Mammary epithelial cell (primary cell): ENCODE measurements at regions of chr16 and their contacts with region 1.

Region 1: GRCh38 chr16:15427648-15428239 is 6.6 kb upstream of the BMERB1 start:
- DNase-seq: no peak
- H3K4me3 ChIP-seq: no peak overlapping the region
- H3K27ac ChIP-seq: no peak overlapping the region
- H3K4me1 ChIP-seq: peaks cover 3% of the 10 kb centered on the region
- H3K27me3 ChIP-seq: no peaks in the 10 kb centered on the region
- CTCF ChIP-seq: peak; percentile 38 to 64

Region 2: DNA sequence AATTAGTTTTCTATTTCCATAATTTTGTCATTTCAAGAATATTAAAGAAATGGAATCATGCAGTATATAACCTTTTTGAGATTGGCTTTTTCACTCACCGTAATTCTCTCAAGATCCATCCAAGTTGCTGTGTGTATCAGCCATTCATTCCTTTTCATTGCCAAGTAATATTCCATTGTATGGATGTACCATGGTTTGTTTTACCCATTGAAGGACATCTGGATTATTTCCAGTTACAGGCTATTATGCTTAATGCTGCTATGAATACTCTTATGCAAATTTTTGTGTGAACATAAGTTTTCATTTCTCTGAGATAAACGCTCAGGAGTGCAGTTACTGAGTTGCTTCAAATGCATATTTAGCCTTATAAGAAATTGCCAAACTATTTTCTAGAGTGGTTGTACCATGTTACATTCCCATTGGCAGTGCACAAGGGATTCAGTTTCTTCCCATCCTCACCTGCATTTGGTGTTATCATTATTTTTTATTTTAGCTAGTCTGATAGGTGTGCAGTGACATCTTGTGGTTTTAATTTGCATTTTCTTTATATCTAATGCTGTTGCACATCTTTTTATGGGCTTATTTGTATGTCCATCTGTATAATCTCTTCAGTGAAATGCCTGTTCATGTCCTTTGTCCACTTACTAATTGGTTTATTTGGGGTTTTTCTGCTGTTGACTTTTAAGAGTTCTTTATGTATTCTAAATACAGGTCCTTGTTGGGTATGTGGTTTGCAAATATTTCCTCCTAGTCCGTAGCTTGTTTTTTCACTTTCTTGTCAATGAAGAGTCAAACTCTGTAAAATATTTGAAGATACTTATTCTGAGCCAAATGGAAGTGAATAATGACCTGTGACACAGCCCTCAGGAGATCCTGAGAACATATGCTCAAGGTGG is 39.4 kb after region 1 on chr16:
- CTCF ChIA-PET with region 1: no interaction called
- dilution Hi-C with region 1: no loop called
- in situ Hi-C with region 1: no loop called
- intact Hi-C with region 1: loop called (anchors 5 kb)
- DNase-seq: no peak
- H3K4me3 ChIP-seq: no peak overlapping the region
- H3K27ac ChIP-seq: no peak overlapping the region
- H3K4me1 ChIP-seq: peaks cover 6% of the 10 kb centered on the region
- H3K27me3 ChIP-seq: no peaks in the 10 kb centered on the region
- CTCF ChIP-seq: peak; percentile 45

Region 3: DNA sequence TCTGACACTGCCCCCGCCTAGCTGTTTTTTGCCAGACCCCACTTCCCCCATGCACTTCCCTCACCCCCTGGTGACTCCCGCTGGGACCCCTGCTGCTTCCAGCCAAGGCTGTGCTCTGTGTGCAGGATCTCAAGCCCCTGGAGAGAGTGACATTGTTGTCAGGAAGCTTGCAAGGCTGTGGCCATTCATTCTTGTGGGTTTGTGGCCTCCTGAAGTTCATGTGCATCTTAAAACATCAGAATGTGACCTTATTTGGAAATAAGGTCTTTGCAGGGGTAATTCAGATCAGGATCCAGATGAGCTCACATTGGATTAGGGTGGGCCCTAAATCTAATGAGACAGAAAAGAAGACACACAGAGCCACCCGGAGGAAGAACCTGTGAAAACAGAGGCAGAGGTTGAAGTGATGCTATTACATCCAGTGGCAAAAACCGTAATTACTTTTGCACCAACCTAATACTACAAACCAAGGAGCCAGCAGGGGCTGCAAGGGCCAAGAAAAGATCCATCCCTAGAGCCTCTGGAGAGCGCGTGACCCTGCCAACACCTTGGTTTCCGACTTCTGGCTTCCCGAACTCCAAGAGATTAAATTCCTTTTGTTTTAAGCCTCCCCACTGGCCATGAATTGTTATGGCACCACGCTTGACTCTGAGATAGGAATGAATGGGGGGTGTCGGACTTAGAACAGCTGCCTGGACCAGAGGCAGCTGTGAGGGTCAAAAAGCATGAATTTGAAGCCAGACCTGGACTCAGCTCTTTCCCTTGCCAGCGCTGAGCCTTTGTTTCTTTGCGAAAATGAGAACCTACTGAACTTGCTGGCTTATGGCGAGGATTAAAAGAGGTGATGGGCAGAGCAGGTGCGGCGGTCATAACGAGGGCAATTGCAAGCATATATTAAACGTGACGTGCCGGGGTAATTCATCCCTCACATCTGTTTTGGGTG is 82.1 kb after region 1 on chr16:
- CTCF ChIA-PET with region 1: no interaction called
- dilution Hi-C with region 1: loop called (anchors 5 kb)
- in situ Hi-C with region 1: no loop called
- intact Hi-C with region 1: no loop called
- DNase-seq: no peak
- H3K4me3 ChIP-seq: no peak overlapping the region
- H3K27ac ChIP-seq: no peak overlapping the region
- H3K4me1 ChIP-seq: peaks cover 12% of the 10 kb centered on the region
- H3K27me3 ChIP-seq: no peaks in the 10 kb centered on the region
- CTCF ChIP-seq: no peak

Region 4: GRCh38 chr16:15553313-15554088 is 125.8 kb after region 1 on chr16:
- CTCF ChIA-PET with region 1: no interaction called
- dilution Hi-C with region 1: no loop called
- in situ Hi-C with region 1: no loop called
- intact Hi-C with region 1: loop called (anchors 10 kb)
- DNase-seq: peak; percentile 11
- H3K4me3 ChIP-seq: no peak overlapping the region
- H3K27ac ChIP-seq: no peak overlapping the region
- H3K4me1 ChIP-seq: no peaks in the 10 kb centered on the region
- H3K27me3 ChIP-seq: no peaks in the 10 kb centered on the region
- CTCF ChIP-seq: no peak

Region 5: GRCh38 chr16:15704545-15704987 is 276.8 kb after region 1 on chr16:
- CTCF ChIA-PET with region 1: no interaction called
- dilution Hi-C with region 1: no loop called
- in situ Hi-C with region 1: no loop called
- intact Hi-C with region 1: loop called (anchors 5 kb)
- DNase-seq: peak; percentile 29
- H3K4me3 ChIP-seq: no peak overlapping the region
- H3K27ac ChIP-seq: no peak overlapping the region
- H3K4me1 ChIP-seq: no peaks in the 10 kb centered on the region
- H3K27me3 ChIP-seq: no peaks in the 10 kb centered on the region
- CTCF ChIP-seq: peak; percentile 74 to 82